ENCODE measurements at regions of chr12 and their contacts with region 1.

Region 1: DNA sequence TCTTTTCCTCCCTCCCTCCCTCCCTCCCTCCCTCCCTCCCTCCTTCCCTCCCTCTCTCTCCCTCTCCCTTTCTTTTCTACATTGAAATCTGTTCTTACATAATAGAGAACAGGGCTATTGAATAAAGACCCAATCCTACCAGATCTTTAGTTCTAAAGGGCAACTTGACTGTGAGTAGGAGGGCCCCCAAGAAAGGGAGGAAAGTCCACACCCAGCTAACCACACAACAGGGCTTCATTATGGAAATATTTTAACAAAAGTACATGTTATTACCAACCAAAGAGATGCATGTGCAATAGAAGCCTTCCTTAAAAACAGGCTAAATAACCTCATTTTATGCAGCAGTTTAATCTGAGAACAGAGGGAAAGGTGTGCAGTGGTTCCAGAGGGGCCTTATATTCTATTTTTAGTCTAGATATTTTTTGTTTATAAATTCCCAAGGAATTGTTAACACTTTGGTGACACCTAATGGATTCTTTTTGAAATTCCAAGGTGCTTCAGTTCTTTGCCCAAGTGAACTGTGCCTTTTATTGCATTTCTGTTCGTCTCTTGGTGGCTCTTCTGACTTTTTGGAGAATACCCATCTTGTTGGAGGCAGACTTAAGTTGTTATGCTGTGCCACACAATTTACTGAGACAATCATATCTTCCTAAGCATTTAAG is 63.0 kb downstream of the GNS start:
- DNase-seq: no peak
- ATAC-seq: peak in 1 of 2 donors; percentile 19
- H3K4me3 Mint-ChIP-seq: peak overlapping the region in 8 of 10 donors; percentile 0 to 63 (median 51)
- H3K27ac Mint-ChIP-seq: peak overlapping the region; percentile 80 to 95 (median 90)
- H3K4me1 Mint-ChIP-seq: peaks cover 50 to 81% (median 80%) of the 10 kb centered on the region in 4 donors
- H3K27me3 Mint-ChIP-seq: no peaks in the 10 kb centered on the region

Region 2: DNA sequence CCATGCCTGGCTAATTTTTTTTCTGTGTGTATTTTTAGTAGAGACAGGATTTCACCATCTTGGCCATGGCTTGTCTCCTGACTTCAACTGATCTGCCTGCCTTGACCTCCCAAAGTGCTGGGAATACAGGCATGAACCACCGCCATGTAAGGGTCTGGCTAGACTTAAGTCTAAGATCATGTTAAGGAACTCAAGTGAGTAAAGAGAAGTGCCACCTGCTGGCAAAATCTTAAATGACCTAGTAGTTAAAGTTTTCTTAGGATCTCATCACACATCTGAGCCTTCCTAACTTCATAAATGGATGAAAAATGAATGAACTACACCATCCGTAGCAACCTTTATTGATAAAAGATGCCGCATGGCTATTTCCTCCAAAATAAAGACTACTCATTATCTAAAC is 304.0 kb before region 1 on chr12:
- POLR2A ChIA-PET with region 1: interaction called, 10 read pairs
- DNase-seq: peak in 3 of 10 donors; percentile 28 to 37 (median 33)
- ATAC-seq: peak; percentile 41 to 62
- H3K4me3 Mint-ChIP-seq: peak overlapping the region in 5 of 10 donors; percentile 30 to 71 (median 49)
- H3K27ac Mint-ChIP-seq: peak overlapping the region in 4 of 10 donors; percentile 13 to 65 (median 40)
- H3K4me1 Mint-ChIP-seq: peaks cover 2 to 12% (median 8%) of the 10 kb centered on the region in 4 donors
- H3K27me3 Mint-ChIP-seq: peaks cover 0 to 17% (median 1%) of the 10 kb centered on the region in 5 donors

Measured in naive thymus-derived CD8-positive, alpha-beta T cell (primary cell).